ENCODE measurements at regions of chr2 and their contacts with region 1.

Region 1: GRCh38 chr2:36734304-36734703 is 37.8 kb downstream of the VIT start:
- DNase-seq: no peak
- ATAC-seq: no peak
- H3K4me3 ChIP-seq: no peak overlapping the region
- H3K4me3 Mint-ChIP-seq: no peak overlapping the region
- H3K27ac ChIP-seq: no peak overlapping the region
- H3K27ac Mint-ChIP-seq: no peak overlapping the region
- H3K4me1 ChIP-seq: no peaks in the 10 kb centered on the region
- H3K4me1 Mint-ChIP-seq: peaks cover 0 to under 1% (median 0%) of the 10 kb centered on the region in 7 donors
- H3K27me3 ChIP-seq: no peaks in the 10 kb centered on the region
- H3K27me3 Mint-ChIP-seq: peaks cover 10 to 26% (median 16%) of the 10 kb centered on the region in 5 donors

Region 2: GRCh38 chr2:36698993-36699392 is 35.3 kb before region 1 on chr2:
- CTCF ChIA-PET with region 1: no interaction called
- POLR2A ChIA-PET with region 1: no interaction called
- intact Hi-C with region 1: loop called in 1 of 2 experiments (anchors 1 kb)
- DNase-seq: no peak
- ATAC-seq: peak; percentile 67
- H3K4me3 ChIP-seq: no peak overlapping the region
- H3K4me3 Mint-ChIP-seq: no peak overlapping the region
- H3K27ac ChIP-seq: no peak overlapping the region
- H3K27ac Mint-ChIP-seq: no peak overlapping the region
- H3K4me1 ChIP-seq: no peaks in the 10 kb centered on the region
- H3K4me1 Mint-ChIP-seq: peaks cover 0 to 2% (median 0%) of the 10 kb centered on the region in 7 donors
- H3K27me3 ChIP-seq: no peaks in the 10 kb centered on the region
- H3K27me3 Mint-ChIP-seq: peaks cover 0 to 11% (median 4%) of the 10 kb centered on the region in 5 donors

Region 3: GRCh38 chr2:36717603-36718266 is 16.6 kb before region 1 on chr2:
- CTCF ChIA-PET with region 1: no interaction called
- POLR2A ChIA-PET with region 1: no interaction called
- intact Hi-C with region 1: no loop called
- DNase-seq: no peak
- ATAC-seq: no peak
- H3K4me3 ChIP-seq: no peak overlapping the region
- H3K4me3 Mint-ChIP-seq: no peak overlapping the region
- H3K27ac ChIP-seq: no peak overlapping the region
- H3K27ac Mint-ChIP-seq: no peak overlapping the region
- H3K4me1 ChIP-seq: no peaks in the 10 kb centered on the region
- H3K4me1 Mint-ChIP-seq: no peaks in the 10 kb centered on the region
- H3K27me3 ChIP-seq: no peaks in the 10 kb centered on the region
- H3K27me3 Mint-ChIP-seq: peaks cover 2 to 27% (median 9%) of the 10 kb centered on the region in 5 donors

Region 4: DNA sequence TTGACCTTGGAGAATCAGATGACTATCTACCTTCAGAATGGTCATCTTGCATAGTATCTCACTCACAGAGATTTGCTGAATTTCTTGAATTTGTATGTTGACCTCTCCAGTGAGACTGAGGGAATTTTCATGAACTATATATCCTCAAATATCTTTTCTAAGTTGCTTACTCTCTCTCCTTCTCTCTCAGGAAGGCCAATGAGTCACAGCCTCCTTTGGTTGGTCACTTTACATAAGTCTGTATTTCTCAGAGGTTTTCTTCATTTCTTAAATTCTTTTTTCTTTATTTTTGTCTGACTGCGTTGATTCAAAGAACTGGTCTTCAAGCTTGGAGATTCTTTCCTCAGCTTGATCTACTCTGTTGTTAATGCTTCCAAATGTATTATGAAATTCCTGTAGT is 13.9 kb after region 1 on chr2:
- CTCF ChIA-PET with region 1: no interaction called
- POLR2A ChIA-PET with region 1: no interaction called
- intact Hi-C with region 1: no loop called
- DNase-seq: no peak
- ATAC-seq: no peak
- H3K4me3 ChIP-seq: no peak overlapping the region
- H3K4me3 Mint-ChIP-seq: no peak overlapping the region
- H3K27ac ChIP-seq: no peak overlapping the region
- H3K27ac Mint-ChIP-seq: no peak overlapping the region
- H3K4me1 ChIP-seq: no peaks in the 10 kb centered on the region
- H3K4me1 Mint-ChIP-seq: no peaks in the 10 kb centered on the region
- H3K27me3 ChIP-seq: peaks cover 0 to under 1% of the 10 kb centered on the region in 2 donors
- H3K27me3 Mint-ChIP-seq: peaks cover 33 to 83% (median 63%) of the 10 kb centered on the region in 5 donors